ENCODE measurements at regions of chr19 and their contacts with region 1.

Region 1: GRCh38 chr19:57435062-57435978 is at the start of gene ZNF749:
- DNase-seq: peak; percentile 84
- ATAC-seq: peak; percentile 99
- H3K4me3 Mint-ChIP-seq: peak within 1 kb of the TSS; percentile 97
- H3K27ac Mint-ChIP-seq: peak within 1 kb of the TSS; percentile 84
- H3K4me1 Mint-ChIP-seq: peaks cover 25% of the 10 kb centered on the region
- H3K27me3 Mint-ChIP-seq: no peaks in the 10 kb centered on the region
- CTCF ChIP-seq: no peak
- total RNA-seq, gene ZNF749: 16.4 and 18.2 TPM in 2 replicates

Region 2: DNA sequence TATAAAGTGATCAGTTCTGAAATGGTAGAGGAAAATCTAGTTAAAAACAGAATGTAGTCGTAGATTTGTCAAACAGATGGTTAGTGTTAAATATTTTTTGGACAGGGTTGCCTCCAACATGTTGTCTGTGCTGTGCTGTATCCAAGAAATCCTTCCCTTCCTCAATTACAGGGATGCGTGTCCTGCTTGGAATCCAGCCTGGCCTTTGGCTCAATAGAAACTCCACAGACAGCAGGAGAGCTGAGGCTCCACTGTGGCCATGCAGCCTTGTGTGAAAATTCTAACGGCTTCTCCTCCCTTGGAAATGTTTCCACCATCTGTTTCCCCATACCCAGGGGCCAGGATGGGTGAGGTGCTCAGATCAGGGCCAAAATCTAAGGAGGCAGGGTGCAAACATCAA is 383.2 kb before region 1 on chr19:
- CTCF ChIA-PET with region 1: no interaction called
- POLR2A ChIA-PET with region 1: no interaction called
- intact Hi-C with region 1: no loop called
- DNase-seq: no peak
- ATAC-seq: no peak
- H3K4me3 Mint-ChIP-seq: no peak overlapping the region
- H3K27ac Mint-ChIP-seq: no peak overlapping the region
- H3K4me1 Mint-ChIP-seq: no peaks in the 10 kb centered on the region
- H3K27me3 Mint-ChIP-seq: no peaks in the 10 kb centered on the region
- CTCF ChIP-seq: no peak

Region 3: GRCh38 chr19:57240311-57241090 is 194.8 kb before region 1 on chr19 and contains the start of gene ZNF805:
- CTCF ChIA-PET with region 1: no interaction called
- POLR2A ChIA-PET with region 1: no interaction called
- intact Hi-C with region 1: loop called (anchors 1 kb)
- DNase-seq: peak; percentile 90
- ATAC-seq: peak; percentile 93
- H3K4me3 Mint-ChIP-seq: peak within 1 kb of the TSS; percentile 95
- H3K27ac Mint-ChIP-seq: peak within 1 kb of the TSS; percentile 93
- H3K4me1 Mint-ChIP-seq: peaks cover 39% of the 10 kb centered on the region
- H3K27me3 Mint-ChIP-seq: no peaks in the 10 kb centered on the region
- CTCF ChIP-seq: no peak
- total RNA-seq, gene ZNF805: 20.3 and 25.9 TPM in 2 replicates

Region 4: DNA sequence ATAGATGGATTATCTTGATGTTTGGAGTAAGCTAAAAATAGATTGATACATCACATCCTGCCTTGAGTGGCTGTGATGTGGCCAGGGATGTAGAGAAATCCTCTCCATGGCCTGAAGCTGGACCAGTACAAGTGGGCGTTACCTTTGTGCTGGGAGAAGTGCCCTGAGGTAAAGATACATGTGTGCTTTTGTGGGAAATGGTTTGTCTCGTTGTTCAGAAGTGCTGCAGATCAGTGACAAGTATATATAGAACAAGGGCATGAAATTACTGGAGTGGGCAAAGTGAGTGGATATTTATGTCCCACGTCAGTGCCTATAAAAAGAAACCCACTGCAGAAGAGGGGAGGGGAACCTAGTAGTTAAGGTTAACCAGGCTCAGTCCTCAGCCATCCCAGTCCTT is 96.4 kb before region 1 on chr19:
- CTCF ChIA-PET with region 1: no interaction called
- POLR2A ChIA-PET with region 1: no interaction called
- intact Hi-C with region 1: no loop called
- DNase-seq: no peak
- ATAC-seq: no peak
- H3K4me3 Mint-ChIP-seq: no peak overlapping the region
- H3K27ac Mint-ChIP-seq: no peak overlapping the region
- H3K4me1 Mint-ChIP-seq: no peaks in the 10 kb centered on the region
- H3K27me3 Mint-ChIP-seq: no peaks in the 10 kb centered on the region
- CTCF ChIP-seq: no peak

Region 5: GRCh38 chr19:57362997-57363705 is 72.2 kb before region 1 on chr19 and contains the starts of genes TRAPPC2B and ZNF547:
- CTCF ChIA-PET with region 1: no interaction called
- POLR2A ChIA-PET with region 1: no interaction called
- intact Hi-C with region 1: loop called (anchors 2 kb)
- DNase-seq: peak; percentile 99
- ATAC-seq: peak; percentile 94
- H3K4me3 Mint-ChIP-seq: peak within 1 kb of the TSS; percentile 92
- H3K27ac Mint-ChIP-seq: peak within 1 kb of the TSS; percentile 95
- H3K4me1 Mint-ChIP-seq: peaks cover 17% of the 10 kb centered on the region
- H3K27me3 Mint-ChIP-seq: no peaks in the 10 kb centered on the region
- CTCF ChIP-seq: no peak
- total RNA-seq, gene TRAPPC2B: 9.7 and 10.2 TPM in 2 replicates
- total RNA-seq, gene ZNF547: 6.0 and 6.3 TPM in 2 replicates

Region 6: DNA sequence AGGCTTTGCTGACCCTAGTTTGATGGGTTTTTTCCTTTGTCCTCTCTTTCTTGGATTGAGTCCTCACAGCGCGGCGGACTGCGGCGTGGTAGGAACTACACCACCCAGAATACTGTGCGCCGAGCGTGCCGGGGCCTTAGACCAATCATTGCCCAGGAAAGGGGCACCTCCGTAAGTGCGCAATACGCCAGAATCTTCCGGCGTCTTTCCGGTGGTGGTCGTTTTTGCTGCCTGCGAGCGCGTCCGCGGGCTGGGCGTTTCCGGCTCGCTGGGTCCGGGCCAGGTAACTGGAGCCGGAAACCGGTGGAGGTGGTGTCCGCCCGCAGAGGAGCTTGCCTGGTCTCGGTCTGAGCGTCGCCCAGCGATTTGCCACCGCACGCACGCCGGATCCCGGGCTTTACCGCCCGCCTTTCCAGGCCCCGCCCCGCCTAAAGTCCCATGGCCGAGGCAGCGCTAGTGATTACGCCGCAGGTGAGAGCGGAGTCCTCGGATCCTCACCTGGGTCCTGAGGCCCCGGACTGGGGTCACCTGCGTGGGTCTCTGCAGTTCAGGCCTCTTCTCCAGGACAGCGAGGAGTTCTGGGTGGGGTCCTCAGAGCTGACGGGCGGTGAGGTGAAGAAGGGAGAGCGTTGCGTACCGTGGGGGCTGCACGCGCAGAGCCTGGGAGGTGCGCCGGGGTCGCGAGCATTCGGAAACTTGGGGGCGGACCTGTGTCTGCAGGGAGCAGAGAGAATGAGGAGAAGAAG is 92.0 kb after region 1 on chr19 and contains the start of gene ZNF549:
- CTCF ChIA-PET with region 1: no interaction called
- POLR2A ChIA-PET with region 1: no interaction called
- intact Hi-C with region 1: loop called (anchors 1 kb)
- DNase-seq: peak; percentile 78
- ATAC-seq: peak; percentile 99
- H3K4me3 Mint-ChIP-seq: peak within 1 kb of the TSS; percentile 96
- H3K27ac Mint-ChIP-seq: peak within 1 kb of the TSS; percentile 88
- H3K4me1 Mint-ChIP-seq: peaks cover 24% of the 10 kb centered on the region
- H3K27me3 Mint-ChIP-seq: no peaks in the 10 kb centered on the region
- CTCF ChIP-seq: no peak
- total RNA-seq, gene ZNF549: 14.0 and 16.9 TPM in 2 replicates

Region 7: DNA sequence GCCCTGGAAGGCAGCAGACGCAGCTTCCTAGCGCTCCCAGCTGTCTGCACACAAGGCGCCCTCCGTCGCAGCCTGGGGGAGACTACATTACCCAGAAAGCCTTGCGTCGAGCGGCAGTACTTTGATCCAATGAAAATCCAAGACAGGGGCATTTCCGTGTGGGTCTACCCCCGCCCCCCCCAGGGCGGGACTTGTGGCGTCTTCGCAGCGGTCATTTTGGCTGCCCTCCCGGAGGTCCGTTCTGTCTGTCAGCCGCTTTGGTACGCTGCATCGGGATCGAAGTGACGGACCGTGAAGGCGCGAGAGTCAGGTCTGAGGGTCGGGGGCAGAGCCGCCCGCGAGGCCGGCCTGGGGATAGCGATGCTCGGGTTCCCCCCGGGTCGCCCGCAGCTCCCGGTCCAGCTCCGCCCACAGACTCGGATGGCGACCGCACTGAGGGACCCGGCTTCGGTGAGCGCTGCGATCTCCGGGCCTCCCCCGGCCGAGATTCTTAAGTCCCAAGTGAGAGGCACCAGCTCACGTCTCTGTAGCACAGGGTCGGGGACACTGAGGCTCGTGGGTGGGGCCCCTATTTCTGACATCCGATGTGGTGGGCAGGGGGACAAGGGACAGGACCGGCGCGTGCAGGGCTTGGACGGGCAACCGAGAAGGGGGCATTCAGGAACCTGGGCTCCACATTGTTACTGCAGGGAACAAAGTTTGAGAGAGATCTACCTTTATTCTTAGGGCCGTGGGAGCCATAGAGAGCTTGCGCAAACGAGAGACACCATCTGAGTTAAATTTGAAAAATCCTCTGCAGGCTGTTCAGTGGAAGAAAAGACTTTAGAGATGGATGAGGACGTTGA is 197.9 kb after region 1 on chr19 and contains the start of gene ZNF211:
- CTCF ChIA-PET with region 1: no interaction called
- POLR2A ChIA-PET with region 1: no interaction called
- intact Hi-C with region 1: loop called (anchors 1 kb)
- DNase-seq: peak; percentile 81
- ATAC-seq: peak; percentile 100
- H3K4me3 Mint-ChIP-seq: peak within 1 kb of the TSS; percentile 94
- H3K27ac Mint-ChIP-seq: peak within 1 kb of the TSS; percentile 87
- H3K4me1 Mint-ChIP-seq: peaks cover 19% of the 10 kb centered on the region
- H3K27me3 Mint-ChIP-seq: no peaks in the 10 kb centered on the region
- CTCF ChIP-seq: no peak
- total RNA-seq, gene ZNF211: 22.0 and 26.0 TPM in 2 replicates

Measured in activated B cell treated with CpG ODN at 0.5 μM for 24 hours (primary cell).